ENCODE measurements at regions of chr3 and their contacts with region 1.

Region 1: DNA sequence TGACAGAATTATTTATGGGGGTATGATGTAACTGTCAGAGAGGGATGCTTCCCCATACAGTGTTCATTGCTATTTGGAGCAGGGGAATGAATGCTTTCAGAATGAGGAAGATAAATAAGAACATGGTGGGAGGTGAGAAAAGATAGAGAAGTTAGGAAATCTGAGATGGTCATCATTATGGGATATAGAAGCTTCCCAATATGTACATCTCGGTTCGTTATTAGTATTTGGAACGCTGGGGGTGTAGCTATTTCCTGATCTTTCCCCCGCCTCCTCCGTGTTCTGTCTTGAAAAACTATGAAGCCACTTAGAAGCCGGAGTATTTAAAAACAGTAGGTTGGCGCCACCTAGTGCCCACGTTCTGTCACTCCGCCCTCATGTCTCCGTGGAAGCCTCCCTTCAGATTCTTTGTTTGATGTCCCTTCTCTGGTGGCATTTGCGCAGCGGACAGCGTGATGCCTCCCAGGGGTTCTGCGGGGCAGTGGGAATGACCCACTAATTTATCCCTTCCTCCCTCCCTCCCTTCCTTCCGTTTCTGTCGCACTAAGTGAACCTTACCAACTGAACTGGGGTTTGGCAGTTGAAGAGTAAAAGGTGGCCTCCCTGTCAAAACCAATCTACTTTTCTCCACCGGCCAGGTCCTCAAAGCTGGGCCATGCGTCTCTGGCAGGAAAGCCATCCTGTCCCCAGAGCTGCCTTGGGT is 184.5 kb downstream of the FEZF2 start:
- DNase-seq: peak; percentile 31 to 63 (median 56)
- ATAC-seq: peak; percentile 67
- H3K4me3 ChIP-seq: no peak overlapping the region
- H3K4me3 Mint-ChIP-seq: peak overlapping the region in 8 of 10 donors; percentile 15 to 66 (median 48)
- H3K27ac ChIP-seq: no peak overlapping the region
- H3K27ac Mint-ChIP-seq: no peak overlapping the region
- H3K4me1 ChIP-seq: no peaks in the 10 kb centered on the region
- H3K4me1 Mint-ChIP-seq: peaks cover 0 to 9% (median 7%) of the 10 kb centered on the region in 7 donors
- H3K27me3 ChIP-seq: no peaks in the 10 kb centered on the region
- H3K27me3 Mint-ChIP-seq: peaks cover 0 to 8% (median 4%) of the 10 kb centered on the region in 5 donors

Region 2: GRCh38 chr3:61858056-61858455 is 330.8 kb before region 1 on chr3:
- CTCF ChIA-PET with region 1: no interaction called
- POLR2A ChIA-PET with region 1: no interaction called
- intact Hi-C with region 1: loop called in 1 of 2 experiments (anchors 2 kb)
- DNase-seq: no peak
- ATAC-seq: no peak
- H3K4me3 ChIP-seq: no peak overlapping the region
- H3K4me3 Mint-ChIP-seq: no peak overlapping the region
- H3K27ac ChIP-seq: no peak overlapping the region
- H3K27ac Mint-ChIP-seq: no peak overlapping the region
- H3K4me1 ChIP-seq: no peaks in the 10 kb centered on the region
- H3K4me1 Mint-ChIP-seq: no peaks in the 10 kb centered on the region
- H3K27me3 ChIP-seq: no peaks in the 10 kb centered on the region
- H3K27me3 Mint-ChIP-seq: peaks cover 4 to 15% (median 10%) of the 10 kb centered on the region in 5 donors